ENCODE measurements at regions of chr6 and their contacts with region 1.

Region 1: DNA sequence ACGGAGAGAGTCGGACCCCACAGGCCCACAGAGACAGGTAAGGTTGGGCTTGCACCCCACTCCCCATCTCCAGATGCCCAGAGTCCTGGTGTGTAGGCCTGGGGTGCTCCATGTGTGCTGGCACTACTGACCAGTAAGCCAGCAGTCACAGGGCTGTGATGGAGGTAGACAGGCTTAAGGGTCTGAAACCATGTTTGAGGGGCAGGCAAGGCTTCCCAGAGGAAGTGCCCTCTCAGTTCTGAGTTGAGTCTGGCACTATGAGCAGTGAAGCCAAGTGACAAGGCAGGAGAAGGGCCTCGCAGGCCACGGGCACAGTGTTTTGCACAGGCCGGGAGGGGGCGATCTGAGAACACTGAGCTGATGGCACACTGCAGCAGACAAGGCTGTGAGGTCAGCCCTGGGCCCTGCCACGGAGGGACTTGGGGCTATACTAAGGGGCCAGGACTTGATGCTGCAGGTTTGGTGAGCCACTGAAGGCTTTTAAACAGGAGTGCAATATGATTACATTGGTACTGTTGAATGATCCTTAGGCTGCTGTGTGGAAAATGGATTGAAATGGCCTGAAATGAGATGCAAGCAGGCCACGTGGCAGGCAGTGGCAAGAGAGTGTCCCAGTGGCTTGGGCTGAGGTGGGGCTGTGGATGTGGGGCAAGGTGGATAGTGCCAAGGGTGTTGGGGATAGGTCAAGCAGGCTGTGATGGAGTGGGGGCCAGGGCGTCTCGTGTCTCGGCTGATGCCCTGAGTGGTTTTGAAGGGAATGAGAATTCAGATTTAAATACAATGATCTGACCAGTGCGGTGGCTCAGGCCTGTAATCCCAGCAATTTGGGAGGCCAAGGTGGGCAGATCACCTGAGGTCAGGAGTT is 20.3 kb downstream of the TTBK1 start:
- DNase-seq: peak; percentile 69 to 73
- H3K4me3 ChIP-seq: no peak overlapping the region
- H3K4me3 Mint-ChIP-seq: no peak overlapping the region
- H3K27ac Mint-ChIP-seq: no peak overlapping the region
- H3K4me1 ChIP-seq: peaks cover 34% of the 10 kb centered on the region
- H3K4me1 Mint-ChIP-seq: peaks cover 21% of the 10 kb centered on the region
- H3K27me3 ChIP-seq: no peaks in the 10 kb centered on the region
- H3K27me3 Mint-ChIP-seq: no peaks in the 10 kb centered on the region
- CTCF ChIP-seq: peak; percentile 55 to 79

Region 2: GRCh38 chr6:43228951-43229802 is 34.4 kb before region 1 on chr6 and contains the start of gene DNPH1:
- CTCF ChIA-PET with region 1: interaction called, 3 read pairs
- POLR2A ChIA-PET with region 1: no interaction called
- intact Hi-C with region 1: loop called (anchors 2 kb)
- DNase-seq: peak; percentile 73 to 91
- H3K4me3 ChIP-seq: peak within 1 kb of the TSS; percentile 64
- H3K4me3 Mint-ChIP-seq: peak within 1 kb of the TSS; percentile 74
- H3K27ac Mint-ChIP-seq: peak within 1 kb of the TSS; percentile 75
- H3K4me1 ChIP-seq: peaks cover 11% of the 10 kb centered on the region
- H3K4me1 Mint-ChIP-seq: peaks cover 5% of the 10 kb centered on the region
- H3K27me3 ChIP-seq: no peaks in the 10 kb centered on the region
- H3K27me3 Mint-ChIP-seq: peaks cover 5% of the 10 kb centered on the region
- CTCF ChIP-seq: peak; percentile 52 to 91
- total RNA-seq, gene DNPH1: 56.1 and 62.6 TPM in 2 replicates

Region 3: GRCh38 chr6:43280234-43280633 is 16.7 kb after region 1 on chr6:
- CTCF ChIA-PET with region 1: interaction called, 9 read pairs
- POLR2A ChIA-PET with region 1: no interaction called
- intact Hi-C with region 1: loop called (anchors 2 kb)
- DNase-seq: no peak
- H3K4me3 ChIP-seq: no peak overlapping the region
- H3K4me3 Mint-ChIP-seq: no peak overlapping the region
- H3K27ac Mint-ChIP-seq: peak overlapping the region; percentile 21
- H3K4me1 ChIP-seq: peaks cover 42% of the 10 kb centered on the region
- H3K4me1 Mint-ChIP-seq: peaks cover 25% of the 10 kb centered on the region
- H3K27me3 ChIP-seq: no peaks in the 10 kb centered on the region
- H3K27me3 Mint-ChIP-seq: no peaks in the 10 kb centered on the region
- CTCF ChIP-seq: no peak

Region 4: GRCh38 chr6:43286980-43287716 is 23.6 kb after region 1 on chr6:
- CTCF ChIA-PET with region 1: interaction called, 17 read pairs
- POLR2A ChIA-PET with region 1: no interaction called
- intact Hi-C with region 1: no loop called
- DNase-seq: peak in 1 of 2 experiments; percentile 26
- H3K4me3 ChIP-seq: no peak overlapping the region
- H3K4me3 Mint-ChIP-seq: no peak overlapping the region
- H3K27ac Mint-ChIP-seq: no peak overlapping the region
- H3K4me1 ChIP-seq: peaks cover under 1% of the 10 kb centered on the region; the same call in 1 of the 2 replicates
- H3K4me1 Mint-ChIP-seq: no peaks in the 10 kb centered on the region
- H3K27me3 ChIP-seq: no peaks in the 10 kb centered on the region
- H3K27me3 Mint-ChIP-seq: no peaks in the 10 kb centered on the region
- CTCF ChIP-seq: peak; percentile 26 to 61

Region 5: DNA sequence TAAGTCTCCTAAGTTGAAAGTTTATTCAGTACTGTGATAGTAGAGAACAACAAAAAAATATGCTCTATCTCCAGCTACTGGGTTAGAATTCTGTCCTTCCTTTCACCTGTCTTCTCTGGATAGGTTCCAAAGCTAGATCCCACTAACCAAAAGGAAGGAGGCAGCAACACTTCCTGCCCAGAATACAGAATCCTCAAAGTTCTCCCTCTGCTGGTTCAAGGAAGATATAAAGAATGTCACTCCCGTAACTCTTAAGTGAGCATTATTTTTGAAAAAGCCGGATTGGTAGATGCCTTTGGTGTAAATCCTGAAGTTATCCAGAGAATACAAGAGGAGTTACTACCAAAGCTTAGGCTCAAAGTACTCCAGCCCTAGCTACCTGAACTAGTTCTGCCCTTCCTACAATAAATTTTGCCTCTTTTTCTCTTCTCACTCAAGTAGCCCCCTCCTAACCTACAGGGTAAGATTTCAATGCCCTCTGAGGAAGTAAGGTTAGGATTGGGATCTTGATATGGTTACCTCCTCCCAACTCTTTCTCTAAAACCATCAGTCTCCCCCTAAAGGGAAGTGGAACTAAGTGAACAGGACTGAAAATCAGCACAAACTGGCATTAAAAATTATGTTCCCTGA is 71.0 kb after region 1 on chr6:
- CTCF ChIA-PET with region 1: interaction called, 10 read pairs
- POLR2A ChIA-PET with region 1: no interaction called
- intact Hi-C with region 1: loop called (anchors 1 kb)
- DNase-seq: peak in 1 of 2 experiments; percentile 55
- H3K4me3 ChIP-seq: no peak overlapping the region
- H3K4me3 Mint-ChIP-seq: no peak overlapping the region
- H3K27ac Mint-ChIP-seq: no peak overlapping the region
- H3K4me1 ChIP-seq: peaks cover 14% of the 10 kb centered on the region
- H3K4me1 Mint-ChIP-seq: peaks cover 14% of the 10 kb centered on the region
- H3K27me3 ChIP-seq: no peaks in the 10 kb centered on the region
- H3K27me3 Mint-ChIP-seq: peaks cover 3% of the 10 kb centered on the region
- CTCF ChIP-seq: peak; percentile 53 to 58